ENCODE measurements at regions of chr6 and their contacts with region 1.

Region 1: DNA sequence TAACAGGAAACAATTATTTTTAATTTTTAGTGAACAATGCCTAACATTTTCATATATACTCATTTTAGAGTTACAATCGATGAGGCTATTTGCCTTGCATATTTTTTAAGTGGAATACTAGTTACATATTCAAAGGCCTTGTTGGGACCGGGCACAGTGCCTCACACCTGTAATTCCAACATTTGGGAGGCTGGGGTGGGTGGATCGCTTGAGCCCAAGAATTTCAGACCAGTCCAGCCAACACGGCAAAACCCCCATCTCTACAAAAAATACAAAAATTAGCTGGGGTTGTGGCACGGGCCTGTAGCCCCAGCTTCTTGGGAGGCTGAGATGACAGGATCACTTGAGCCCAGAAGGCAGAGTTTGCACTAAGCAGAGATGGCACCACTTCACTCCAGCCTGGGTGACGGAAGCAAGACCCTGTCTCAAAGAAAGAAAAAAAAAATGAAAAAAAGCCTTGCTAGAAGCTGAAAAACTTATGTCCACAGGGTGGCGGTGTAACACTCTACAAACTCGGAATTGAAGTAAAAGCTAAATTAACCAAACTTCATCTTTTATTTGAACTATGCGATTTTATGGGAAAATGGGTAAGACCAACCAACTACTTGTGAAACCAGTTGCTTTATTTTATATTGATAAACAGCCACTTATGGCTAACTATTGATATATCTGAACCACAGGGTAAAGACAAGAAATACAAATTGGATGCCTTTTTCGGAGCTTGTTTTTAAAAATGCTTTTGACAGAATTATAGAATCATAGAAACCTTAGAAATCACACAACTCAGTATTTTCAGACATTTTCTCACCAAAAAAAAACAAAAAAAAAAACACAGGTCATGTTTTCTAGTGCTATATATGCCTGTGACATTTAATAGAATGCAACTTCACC is 24.1 kb upstream of the ROS1 start:
- DNase-seq: peak; percentile 77
- ATAC-seq: no peak
- H3K4me3 ChIP-seq: no peak overlapping the region; the same call in 1 of the 2 replicates
- H3K27ac ChIP-seq: peak overlapping the region; percentile 79
- H3K4me1 ChIP-seq: peaks cover 36% of the 10 kb centered on the region
- H3K27me3 ChIP-seq: no peaks in the 10 kb centered on the region
- CTCF ChIP-seq: peak; percentile 81

Region 2: DNA sequence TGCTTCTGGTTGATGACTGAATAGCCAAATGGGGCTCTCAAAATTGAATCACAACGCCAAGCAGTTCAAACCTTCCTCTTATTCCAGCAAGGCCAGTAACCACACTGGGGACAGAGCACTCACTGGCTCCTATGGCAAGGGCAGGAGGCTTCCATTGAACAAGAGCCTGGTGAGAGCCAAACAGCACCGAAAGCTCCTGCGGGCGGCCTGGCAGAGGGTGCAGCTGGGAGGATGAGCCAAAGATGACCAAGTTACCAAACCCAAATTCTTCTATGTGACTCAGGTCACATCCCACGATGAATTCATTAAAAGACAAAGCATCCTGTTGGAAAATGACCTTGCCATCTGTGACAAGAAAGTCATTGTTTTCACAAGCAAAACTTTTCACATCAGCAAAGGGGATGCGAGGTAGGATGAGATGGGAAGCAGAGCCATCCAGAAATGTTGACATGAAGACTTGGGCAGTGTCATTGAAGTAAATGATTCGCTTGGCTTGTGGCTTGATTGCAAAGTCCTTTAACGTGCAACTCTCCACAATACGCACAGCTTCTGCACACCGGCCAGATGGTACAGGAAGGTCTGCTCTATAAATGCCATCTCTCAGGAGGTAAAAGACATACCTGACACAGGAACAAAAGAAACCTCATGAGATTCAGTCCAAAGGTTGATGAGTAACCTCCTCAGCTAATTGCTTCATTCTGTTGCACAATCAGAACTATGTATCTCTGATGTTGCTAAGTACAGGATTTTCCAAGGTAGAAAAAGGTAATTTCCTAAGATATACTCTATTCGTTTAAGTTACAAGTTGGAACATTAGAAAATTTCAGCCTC is 60.4 kb before region 1 on chr6:
- CTCF ChIA-PET with region 1: no interaction called
- POLR2A ChIA-PET with region 1: no interaction called
- intact Hi-C with region 1: loop called (anchors 2 kb)
- DNase-seq: peak; percentile 89
- ATAC-seq: peak; percentile 68
- H3K4me3 ChIP-seq: peak overlapping the region; percentile 31; the same call in 1 of the 2 replicates
- H3K27ac ChIP-seq: peak overlapping the region; percentile 90
- H3K4me1 ChIP-seq: peaks cover 58% of the 10 kb centered on the region
- H3K27me3 ChIP-seq: no peaks in the 10 kb centered on the region
- CTCF ChIP-seq: no peak

Region 3: GRCh38 chr6:117482240-117483003 is 32.6 kb after region 1 on chr6 and contains the start of gene DCBLD1:
- CTCF ChIA-PET with region 1: no interaction called
- POLR2A ChIA-PET with region 1: no interaction called
- intact Hi-C with region 1: loop called (anchors 2 kb)
- DNase-seq: peak; percentile 79
- ATAC-seq: peak; percentile 82
- H3K4me3 ChIP-seq: peak within 1 kb of the TSS; percentile 77
- H3K27ac ChIP-seq: peak within 1 kb of the TSS; percentile 9; the same call in 1 of the 2 replicates
- H3K4me1 ChIP-seq: peaks cover 23% of the 10 kb centered on the region
- H3K27me3 ChIP-seq: no peaks in the 10 kb centered on the region
- CTCF ChIP-seq: no peak
- total RNA-seq, gene DCBLD1: 31.1 and 35.9 TPM in 2 replicates

Region 4: GRCh38 chr6:117555882-117556498 is 106.2 kb after region 1 on chr6:
- CTCF ChIA-PET with region 1: interaction called, 3 read pairs
- POLR2A ChIA-PET with region 1: no interaction called
- intact Hi-C with region 1: loop called (anchors 1 kb)
- DNase-seq: peak; percentile 76
- ATAC-seq: peak; percentile 38; the same call in 1 of the 2 replicates
- H3K4me3 ChIP-seq: no peak overlapping the region
- H3K27ac ChIP-seq: no peak overlapping the region
- H3K4me1 ChIP-seq: peaks cover 11% of the 10 kb centered on the region
- H3K27me3 ChIP-seq: no peaks in the 10 kb centered on the region
- CTCF ChIP-seq: peak; percentile 66

Region 5: GRCh38 chr6:117674991-117675657 is 225.3 kb after region 1 on chr6 and contains the start of gene NUS1:
- CTCF ChIA-PET with region 1: no interaction called
- POLR2A ChIA-PET with region 1: no interaction called
- intact Hi-C with region 1: loop called (anchors 10 kb)
- DNase-seq: peak; percentile 94
- ATAC-seq: peak; percentile 97
- H3K4me3 ChIP-seq: peak within 1 kb of the TSS; percentile 78
- H3K27ac ChIP-seq: no peak within 1 kb of the TSS
- H3K4me1 ChIP-seq: peaks cover 25% of the 10 kb centered on the region
- H3K27me3 ChIP-seq: no peaks in the 10 kb centered on the region
- CTCF ChIP-seq: peak; percentile 76
- total RNA-seq, gene NUS1: 12.7 and 18.0 TPM in 2 replicates

Measured in PC-3 (cell line).